Left colon (tissue), 2 donors: ENCODE measurements at regions of chr12 and their contacts with region 1.

Region 1: GRCh38 chr12:47725893-47726292 is 603 bp upstream of the ENDOU start:
- DNase-seq: no peak
- ATAC-seq: no peak

Region 2: DNA sequence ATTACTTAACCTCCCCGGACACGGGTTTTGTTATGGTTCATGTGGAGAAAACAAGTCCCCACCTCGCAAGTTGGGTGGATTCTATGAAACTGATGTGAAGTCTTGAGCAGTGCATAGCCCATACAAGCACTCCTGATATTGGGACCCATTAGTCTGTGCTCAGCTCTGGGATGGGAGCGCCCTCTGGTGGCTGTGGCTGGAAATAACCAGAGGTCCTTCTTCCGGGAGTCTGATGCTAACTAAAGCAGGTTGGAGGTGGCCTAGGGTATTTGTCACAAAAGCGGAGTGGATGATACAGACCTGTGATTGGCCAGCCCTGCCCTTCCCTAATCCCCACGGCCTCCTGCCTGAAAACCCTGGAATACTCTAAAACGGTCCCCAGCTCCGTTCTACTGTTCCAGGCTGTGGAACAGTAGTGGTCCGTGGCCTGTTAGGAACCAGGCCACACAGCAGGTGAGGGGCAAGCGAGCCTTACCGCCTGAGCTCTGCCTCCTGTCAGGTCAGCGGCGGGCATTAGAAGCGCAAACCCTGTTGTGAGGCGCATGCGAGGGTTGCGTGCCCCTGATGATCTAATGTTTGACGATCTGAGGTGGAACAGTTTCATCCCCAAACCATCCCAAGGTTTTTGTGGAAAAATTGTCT is 53.5 kb after region 1 on chr12:
- intact Hi-C with region 1: loop called in 1 of 2 experiments (anchors 10 kb)
- DNase-seq: peak; percentile 72 to 88
- ATAC-seq: peak; percentile 81